ENCODE measurements at regions of chr1 and their contacts with region 1.

Region 1: DNA sequence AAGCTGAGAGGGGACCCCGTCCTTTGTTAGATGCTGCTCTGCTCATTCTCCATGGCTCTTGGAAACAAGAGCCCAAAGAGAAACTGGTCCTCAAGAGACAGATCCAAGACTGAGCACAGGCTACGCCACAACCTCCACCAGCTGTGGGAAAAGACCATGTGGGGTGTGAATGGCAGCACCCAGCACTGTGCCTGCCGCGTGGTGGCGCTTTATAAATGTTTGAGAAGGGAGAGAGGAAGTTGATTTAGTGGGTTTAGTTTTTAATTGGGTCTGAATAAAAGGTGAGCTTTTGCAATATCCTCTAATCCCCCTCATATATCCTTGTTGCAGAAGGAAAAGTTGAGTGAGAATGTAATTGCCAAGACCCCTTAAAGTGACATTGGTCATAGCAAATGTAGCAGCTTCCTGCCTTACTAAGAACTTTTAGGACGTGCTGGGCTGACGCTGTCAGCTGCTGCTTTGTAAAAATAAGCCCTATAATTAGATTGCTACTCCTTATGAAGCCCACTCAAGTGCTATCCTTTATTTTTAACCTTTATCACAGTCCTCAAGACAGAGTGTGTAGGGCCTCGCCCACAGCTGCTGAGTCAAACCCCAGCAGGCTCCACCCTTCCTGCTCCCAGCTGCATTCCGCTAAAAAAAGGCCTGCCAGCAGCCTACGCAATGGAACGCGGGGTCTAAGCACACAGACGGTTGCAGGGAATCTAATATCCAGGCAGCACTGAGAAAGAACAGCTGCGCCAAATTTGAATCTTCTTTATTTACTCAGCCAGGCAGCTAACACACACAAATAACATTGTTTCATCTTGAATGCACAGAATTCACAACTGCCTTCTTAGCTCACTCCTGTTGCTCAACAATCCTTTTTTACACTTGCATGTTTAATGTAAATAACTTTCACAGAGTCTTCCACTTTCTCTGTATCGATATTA is 47.4 kb upstream of the PRDX6 start:
- DNase-seq: peak; percentile 79
- H3K4me3 Mint-ChIP-seq: peak overlapping the region; percentile 41
- H3K27ac Mint-ChIP-seq: peak overlapping the region; percentile 81
- H3K4me1 Mint-ChIP-seq: peaks cover 25% of the 10 kb centered on the region
- H3K27me3 Mint-ChIP-seq: no peaks in the 10 kb centered on the region

Region 2: DNA sequence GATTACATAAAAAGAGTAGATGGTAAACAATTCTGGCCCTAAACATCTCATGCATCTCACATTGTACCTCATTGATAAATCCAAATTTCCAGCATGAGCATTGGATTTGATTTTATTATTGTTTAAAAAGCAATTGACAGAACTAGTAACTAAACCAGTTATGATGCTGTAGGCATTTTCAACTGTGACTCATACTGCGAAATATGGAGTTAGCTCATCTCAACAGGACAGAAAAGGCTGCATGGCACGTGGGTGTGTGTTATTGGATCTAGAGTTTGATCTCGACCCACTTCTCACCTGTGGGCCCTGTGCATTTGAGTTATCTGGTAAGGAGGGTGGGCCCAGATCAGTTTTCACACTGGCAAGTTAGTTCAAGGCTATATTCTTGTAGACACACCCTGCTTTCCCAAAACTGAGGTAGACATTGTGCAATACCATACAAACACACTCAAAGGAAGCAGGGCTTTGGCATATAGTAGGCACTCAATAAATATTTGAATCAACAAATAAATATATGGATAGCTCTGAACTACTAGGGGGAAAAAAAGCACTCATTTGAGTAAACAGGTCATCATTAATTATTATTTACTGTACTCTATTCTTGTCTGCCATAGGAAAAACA is 23.9 kb before region 1 on chr1:
- CTCF ChIA-PET with region 1: no interaction called
- DNase-seq: no peak
- H3K4me3 Mint-ChIP-seq: no peak overlapping the region
- H3K27ac Mint-ChIP-seq: no peak overlapping the region
- H3K4me1 Mint-ChIP-seq: peaks cover 25% of the 10 kb centered on the region
- H3K27me3 Mint-ChIP-seq: no peaks in the 10 kb centered on the region

Region 3: DNA sequence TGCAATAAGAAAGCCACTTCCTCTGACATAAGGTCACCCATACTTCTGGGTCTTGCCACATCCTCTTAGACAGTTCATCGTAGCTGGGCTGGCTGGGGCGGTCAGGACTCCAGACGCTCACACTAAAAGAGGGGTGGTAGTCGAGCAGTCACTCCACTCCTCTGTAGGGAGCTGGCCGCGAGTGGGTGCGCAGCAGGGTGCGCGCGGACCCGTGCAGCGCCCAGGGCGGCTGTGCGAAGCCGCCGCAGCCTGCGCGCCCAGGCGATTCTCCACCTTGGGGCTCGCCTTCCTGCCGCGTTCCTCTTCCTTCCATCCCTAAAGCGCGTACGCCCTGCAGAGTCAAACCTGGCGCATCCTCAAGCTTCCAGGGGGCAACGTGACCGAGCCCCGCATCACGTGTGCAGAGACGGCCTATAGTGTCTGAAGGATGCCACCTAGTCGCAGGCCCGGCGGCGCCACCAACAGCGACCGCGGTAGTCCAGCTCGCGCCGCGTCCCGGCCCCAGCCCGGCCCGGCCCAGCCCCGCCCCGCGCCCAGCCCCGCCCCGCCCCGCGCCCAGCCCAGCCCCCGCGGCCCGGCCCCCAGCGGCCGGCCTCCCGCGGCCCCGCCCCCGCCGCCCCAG is 47.0 kb after region 1 on chr1:
- CTCF ChIA-PET with region 1: interaction called, 14 read pairs
- DNase-seq: peak; percentile 86
- H3K4me3 Mint-ChIP-seq: peak overlapping the region; percentile 88
- H3K27ac Mint-ChIP-seq: peak overlapping the region; percentile 96
- H3K4me1 Mint-ChIP-seq: peaks cover 60% of the 10 kb centered on the region
- H3K27me3 Mint-ChIP-seq: no peaks in the 10 kb centered on the region

Region 4: DNA sequence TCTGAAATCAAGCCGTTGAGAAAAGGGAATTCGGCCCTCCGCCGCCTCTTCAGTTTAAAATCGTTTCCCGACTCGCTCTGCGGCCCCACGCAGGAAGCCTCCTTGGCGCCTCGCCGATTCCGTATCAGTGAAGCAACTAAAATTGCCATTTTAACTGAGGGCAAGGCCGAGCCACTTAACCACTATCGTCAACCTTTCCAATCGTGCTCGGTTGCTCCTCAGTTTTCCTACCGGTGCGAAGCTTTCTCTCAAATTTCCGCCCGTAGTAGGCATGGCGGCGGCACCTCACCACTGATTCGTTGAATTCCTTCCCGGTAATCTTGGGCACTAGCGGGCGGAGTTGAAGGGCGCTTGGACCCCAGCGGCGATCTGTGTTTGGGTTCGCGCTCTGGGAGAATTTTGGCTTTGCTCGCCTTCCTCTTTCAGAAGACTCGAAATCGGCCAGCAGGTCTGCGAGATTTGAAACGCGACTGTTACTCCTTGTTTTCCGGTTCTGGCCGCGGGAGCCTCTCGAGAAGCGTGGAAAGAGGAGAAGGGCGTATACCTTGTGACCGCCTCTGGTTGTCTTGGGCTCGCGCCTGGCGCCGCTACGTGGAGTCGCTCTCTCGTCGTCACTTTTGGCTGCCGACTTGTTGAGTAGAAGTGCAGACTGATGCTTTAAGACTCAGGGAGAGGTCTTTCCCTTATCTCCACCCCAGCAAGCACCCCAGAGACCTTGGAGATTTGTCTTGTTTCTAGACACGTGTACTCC is 394.8 kb after region 1 on chr1 and contains the starts of genes CENPL and DARS2:
- CTCF ChIA-PET with region 1: interaction called, 55 read pairs
- DNase-seq: peak; percentile 95
- H3K4me3 Mint-ChIP-seq: peak within 1 kb of the TSS; percentile 85
- H3K27ac Mint-ChIP-seq: peak within 1 kb of the TSS; percentile 98
- H3K4me1 Mint-ChIP-seq: peaks cover 67% of the 10 kb centered on the region
- H3K27me3 Mint-ChIP-seq: no peaks in the 10 kb centered on the region

Region 5: DNA sequence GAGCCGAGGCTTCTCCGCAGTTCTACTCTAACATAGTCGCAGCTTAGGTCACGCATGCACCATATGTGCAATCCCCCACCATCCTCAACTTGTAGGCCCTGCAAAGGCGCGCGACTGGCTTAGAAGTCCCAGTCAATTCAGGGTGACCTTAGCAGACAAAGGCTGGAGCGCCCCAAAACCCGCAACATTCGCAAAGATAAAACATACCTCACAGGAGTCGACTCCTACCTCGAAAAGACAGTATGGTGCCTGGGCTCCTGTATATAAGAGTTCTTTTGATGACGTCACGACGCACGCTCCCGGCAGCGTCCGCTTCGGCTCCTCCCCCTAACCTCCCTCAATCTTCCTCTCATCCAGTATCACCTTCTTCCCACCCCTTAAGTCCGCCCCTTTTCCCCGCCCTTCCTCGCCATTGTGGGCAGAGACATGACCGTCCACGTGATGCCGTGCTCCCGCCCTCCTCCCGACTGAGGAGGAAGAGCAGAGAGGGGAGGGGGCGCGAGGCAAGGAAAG is 438.1 kb after region 1 on chr1 and contains the start of gene GAS5:
- CTCF ChIA-PET with region 1: interaction called, 10 read pairs
- DNase-seq: peak; percentile 100
- H3K4me3 Mint-ChIP-seq: peak within 1 kb of the TSS; percentile 93
- H3K27ac Mint-ChIP-seq: peak within 1 kb of the TSS; percentile 96
- H3K4me1 Mint-ChIP-seq: peaks cover 71% of the 10 kb centered on the region
- H3K27me3 Mint-ChIP-seq: no peaks in the 10 kb centered on the region